ENCODE measurements at regions of chr5 and their contacts with region 1.

Region 1: GRCh38 chr5:88883059-88883835 is at the start of gene MEF2C:
- DNase-seq: peak; percentile 70 to 82
- ATAC-seq: peak; percentile 69 to 73
- H3K4me3 ChIP-seq: peak within 1 kb of the TSS; percentile 59 to 81 (median 70)
- H3K27ac ChIP-seq: peak within 1 kb of the TSS; percentile 86 to 96 (median 94)
- H3K4me1 ChIP-seq: peaks cover 46 to 50% of the 10 kb centered on the region in 2 donors
- H3K27me3 ChIP-seq: no peaks in the 10 kb centered on the region
- CTCF ChIP-seq: no peak
- POLR2A ChIP-seq: peak; percentile 83
- total RNA-seq, gene MEF2C: 63.8 to 192 (median 128) TPM

Region 2: DNA sequence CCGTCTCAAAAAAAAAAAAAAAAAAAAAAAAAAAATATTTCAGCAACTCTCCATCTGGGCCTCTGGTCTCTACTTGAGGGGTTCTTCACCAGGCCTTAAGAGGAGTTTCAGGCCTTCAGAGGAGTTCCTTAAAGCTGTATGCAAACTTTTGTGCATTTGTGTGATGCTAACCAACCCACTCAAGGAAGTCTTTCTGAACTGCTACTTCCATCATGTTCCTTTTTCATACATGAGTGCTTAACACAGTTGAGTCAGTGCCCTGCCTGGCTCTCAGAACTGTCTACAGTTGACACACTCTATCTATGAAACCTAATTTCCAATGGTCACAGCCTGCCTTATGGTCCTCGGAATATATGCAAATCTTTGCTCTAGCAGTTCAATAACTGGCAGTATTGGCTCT is 146.8 kb before region 1 on chr5:
- in situ Hi-C with region 1: loop called in 3 of 4 experiments (anchors 10 to 25 kb)
- intact Hi-C with region 1: loop called (anchors 2 kb)
- DNase-seq: no peak
- ATAC-seq: no peak
- H3K4me3 ChIP-seq: no peak overlapping the region
- H3K27ac ChIP-seq: peak overlapping the region; percentile 81 to 84 (median 82)
- H3K4me1 ChIP-seq: peaks cover 60 to 75% of the 10 kb centered on the region in 2 donors
- H3K27me3 ChIP-seq: no peaks in the 10 kb centered on the region
- CTCF ChIP-seq: no peak
- POLR2A ChIP-seq: no peak

Region 3: GRCh38 chr5:88826646-88827585 is 56.3 kb before region 1 on chr5:
- in situ Hi-C with region 1: loop called in 2 of 4 experiments (anchors 5 to 10 kb)
- intact Hi-C with region 1: loop called (anchors 2 kb)
- DNase-seq: peak in 1 of 2 donors; percentile 46
- ATAC-seq: peak; percentile 43 to 45
- H3K4me3 ChIP-seq: peak overlapping the region; percentile 18 to 32 (median 25)
- H3K27ac ChIP-seq: peak overlapping the region; percentile 84 to 90 (median 87)
- H3K4me1 ChIP-seq: peaks cover 93 to 95% of the 10 kb centered on the region in 2 donors
- H3K27me3 ChIP-seq: no peaks in the 10 kb centered on the region
- CTCF ChIP-seq: no peak
- POLR2A ChIP-seq: peak; percentile 39 to 78

Region 4: DNA sequence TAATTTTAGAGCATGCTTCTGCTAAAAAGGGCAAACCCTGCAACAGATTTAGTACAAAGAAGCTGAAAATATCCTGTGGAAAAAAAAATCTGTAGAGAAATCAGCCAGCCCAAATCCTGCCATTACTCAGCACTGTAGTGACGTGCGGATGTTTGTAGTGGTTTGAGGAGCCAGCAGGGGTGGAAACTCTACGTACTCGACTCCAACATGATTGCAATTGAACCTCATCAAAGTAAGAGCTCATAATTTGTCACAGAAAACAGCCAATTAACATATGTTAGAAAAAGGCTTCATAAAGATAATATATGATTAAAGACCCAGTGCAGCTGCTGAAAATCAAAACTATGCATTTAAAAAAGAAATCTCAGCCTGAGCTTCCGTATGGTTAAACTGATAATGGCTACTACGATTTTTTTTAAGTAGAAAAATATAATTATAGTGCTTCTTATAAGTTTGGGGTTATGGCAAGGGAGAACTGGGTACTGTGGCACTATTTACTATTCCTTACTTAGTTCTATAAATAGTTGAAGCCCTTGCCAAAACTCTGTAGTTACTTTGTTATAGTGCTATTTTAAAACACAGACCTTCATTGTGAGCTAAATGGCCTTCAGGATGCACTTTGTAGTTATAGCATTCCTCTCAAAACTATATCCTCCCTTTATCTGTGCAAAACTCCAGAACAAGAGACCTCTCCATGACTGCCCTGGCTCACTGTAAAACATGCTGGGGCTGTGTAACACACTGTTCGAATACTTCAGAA is 49.7 kb before region 1 on chr5:
- in situ Hi-C with region 1: loop called in 2 of 4 experiments (anchors 5 to 10 kb)
- intact Hi-C with region 1: loop called (anchors 2 kb)
- DNase-seq: peak in 1 of 2 donors; percentile 43
- ATAC-seq: peak; percentile 58 to 67
- H3K4me3 ChIP-seq: peak overlapping the region; percentile 19 to 32 (median 22)
- H3K27ac ChIP-seq: peak overlapping the region; percentile 84 to 90 (median 87)
- H3K4me1 ChIP-seq: peaks cover 85 to 86% of the 10 kb centered on the region in 2 donors
- H3K27me3 ChIP-seq: no peaks in the 10 kb centered on the region
- CTCF ChIP-seq: no peak
- POLR2A ChIP-seq: no peak

Region 5: GRCh38 chr5:90409318-90410177 is 1526.3 kb after region 1 on chr5 and contains the start of gene CETN3:
- in situ Hi-C with region 1: no loop called
- intact Hi-C with region 1: loop called (anchors 5 kb)
- DNase-seq: peak; percentile 92 to 93
- ATAC-seq: peak; percentile 99
- H3K4me3 ChIP-seq: peak within 1 kb of the TSS; percentile 76 to 97 (median 86)
- H3K27ac ChIP-seq: peak within 1 kb of the TSS; percentile 92 to 97 (median 94)
- H3K4me1 ChIP-seq: peaks cover 12 to 14% of the 10 kb centered on the region in 2 donors
- H3K27me3 ChIP-seq: no peaks in the 10 kb centered on the region
- CTCF ChIP-seq: peak in 1 of 5 experiments; percentile 12
- POLR2A ChIP-seq: peak; percentile 62 to 89
- total RNA-seq, gene CETN3: 1.4 to 4.9 (median 3.2) TPM